Activated CD8-positive, alpha-beta T cell treated with anti-CD3 and anti-CD28 coated beads for 36 hours (primary cell): ENCODE measurements at regions of chr11 and their contacts with region 1.

Region 1: GRCh38 chr11:5123802-5124521 is 14.2 kb downstream of the OR52A5 start:
- DNase-seq: peak; percentile 69
- ATAC-seq: peak; percentile 62
- H3K4me3 Mint-ChIP-seq: no peak overlapping the region
- H3K27ac Mint-ChIP-seq: no peak overlapping the region
- H3K4me1 Mint-ChIP-seq: no peaks in the 10 kb centered on the region
- H3K27me3 Mint-ChIP-seq: peaks cover 14% of the 10 kb centered on the region
- CTCF ChIP-seq: peak; percentile 84

Region 2: DNA sequence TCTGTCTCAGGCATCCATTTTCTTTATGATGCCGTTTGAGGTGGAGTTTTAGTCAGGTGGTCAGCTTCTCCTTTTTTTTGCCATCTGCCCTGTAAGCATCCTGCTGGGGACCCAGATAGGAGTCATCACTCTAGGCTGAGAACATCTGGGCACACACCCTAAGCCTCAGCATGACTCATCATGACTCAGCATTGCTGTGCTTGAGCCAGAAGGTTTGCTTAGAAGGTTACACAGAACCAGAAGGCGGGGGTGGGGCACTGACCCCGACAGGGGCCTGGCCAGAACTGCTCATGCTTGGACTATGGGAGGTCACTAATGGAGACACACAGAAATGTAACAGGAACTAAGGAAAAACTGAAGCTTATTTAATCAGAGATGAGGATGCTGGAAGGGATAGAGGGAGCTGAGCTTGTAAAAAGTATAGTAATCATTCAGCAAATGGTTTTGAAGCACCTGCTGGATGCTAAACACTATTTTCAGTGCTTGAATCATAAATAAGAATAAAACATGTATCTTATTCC is 156.7 kb after region 1 on chr11:
- CTCF ChIA-PET with region 1: no interaction called
- POLR2A ChIA-PET with region 1: no interaction called
- intact Hi-C with region 1: loop called (anchors 10 kb)
- DNase-seq: peak; percentile 37
- ATAC-seq: peak; percentile 60
- H3K4me3 Mint-ChIP-seq: no peak overlapping the region
- H3K27ac Mint-ChIP-seq: no peak overlapping the region
- H3K4me1 Mint-ChIP-seq: no peaks in the 10 kb centered on the region
- H3K27me3 Mint-ChIP-seq: peaks cover 3% of the 10 kb centered on the region
- CTCF ChIP-seq: no peak

Region 3: GRCh38 chr11:5380740-5381342 is 256.9 kb after region 1 on chr11:
- CTCF ChIA-PET with region 1: interaction called, 19 read pairs
- POLR2A ChIA-PET with region 1: no interaction called
- intact Hi-C with region 1: loop called (anchors 5 kb)
- DNase-seq: peak; percentile 46
- ATAC-seq: peak; percentile 51
- H3K4me3 Mint-ChIP-seq: no peak overlapping the region
- H3K27ac Mint-ChIP-seq: no peak overlapping the region
- H3K4me1 Mint-ChIP-seq: no peaks in the 10 kb centered on the region
- H3K27me3 Mint-ChIP-seq: peaks cover 2% of the 10 kb centered on the region
- CTCF ChIP-seq: peak; percentile 63